Activated B cell treated with CpG ODN at 0.5 μM for 24 hours (primary cell): ENCODE measurements at regions of chr1 and their contacts with region 1.

Region 1: DNA sequence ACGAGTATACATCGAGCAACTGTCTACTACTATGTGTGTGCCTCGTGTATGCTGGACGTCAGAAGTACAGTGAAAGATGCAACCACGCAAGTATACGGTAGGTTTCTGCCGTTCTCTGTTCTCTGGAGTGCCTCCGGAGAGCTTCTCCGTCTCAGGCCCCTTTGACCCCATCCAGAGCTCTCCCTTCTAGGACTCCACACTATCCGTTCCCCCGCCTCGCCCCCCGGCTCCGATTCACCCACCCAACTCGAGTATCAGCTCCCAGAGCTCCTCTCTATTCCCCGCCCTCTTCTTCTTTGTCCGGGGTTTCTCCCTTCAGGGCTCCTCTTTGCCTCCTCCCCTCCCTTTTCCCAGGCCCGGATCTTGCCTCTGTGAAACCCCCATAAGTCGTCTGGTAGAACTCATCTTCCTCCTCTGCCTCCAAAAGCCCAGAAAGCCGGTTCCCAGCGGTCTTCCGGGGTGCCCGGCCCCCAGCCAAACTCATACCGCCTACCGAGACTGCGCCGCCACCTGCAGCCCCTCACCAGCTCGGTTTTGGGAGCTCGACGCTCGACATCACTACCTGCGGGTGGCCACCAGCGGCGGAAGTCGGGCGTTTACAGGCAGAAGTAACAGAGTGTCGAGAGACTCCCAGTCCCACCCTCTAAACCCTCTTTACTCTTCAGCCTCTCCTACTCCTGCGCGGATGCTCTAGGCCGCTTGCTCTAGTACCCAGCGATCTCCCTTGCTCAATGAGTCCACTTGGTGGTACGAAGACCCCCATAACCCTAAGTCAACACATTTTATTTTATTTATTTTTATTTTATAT is at the start of gene VPS72:
- DNase-seq: peak; percentile 73
- ATAC-seq: peak; percentile 93
- H3K4me3 Mint-ChIP-seq: peak within 1 kb of the TSS; percentile 100
- H3K27ac Mint-ChIP-seq: peak within 1 kb of the TSS; percentile 99
- H3K4me1 Mint-ChIP-seq: peaks cover 34% of the 10 kb centered on the region
- H3K27me3 Mint-ChIP-seq: no peaks in the 10 kb centered on the region
- CTCF ChIP-seq: no peak
- total RNA-seq, gene VPS72: 58.8 and 72.1 TPM in 2 replicates

Region 2: GRCh38 chr1:151130987-151131586 is 58.8 kb before region 1 on chr1:
- CTCF ChIA-PET with region 1: no interaction called
- POLR2A ChIA-PET with region 1: interaction called, 16 read pairs
- intact Hi-C with region 1: no loop called
- DNase-seq: peak; percentile 73
- ATAC-seq: peak; percentile 100
- H3K4me3 Mint-ChIP-seq: peak overlapping the region; percentile 84
- H3K27ac Mint-ChIP-seq: peak overlapping the region; percentile 89
- H3K4me1 Mint-ChIP-seq: peaks cover 12% of the 10 kb centered on the region
- H3K27me3 Mint-ChIP-seq: no peaks in the 10 kb centered on the region
- CTCF ChIP-seq: no peak

Region 3: GRCh38 chr1:151165738-151166505 is 23.9 kb before region 1 on chr1 and contains the starts of genes LYSMD1 and SCNM1:
- CTCF ChIA-PET with region 1: no interaction called
- POLR2A ChIA-PET with region 1: interaction called, 12 read pairs
- intact Hi-C with region 1: loop called (anchors 1 kb)
- DNase-seq: peak; percentile 87
- ATAC-seq: peak; percentile 96
- H3K4me3 Mint-ChIP-seq: peak within 1 kb of the TSS; percentile 92
- H3K27ac Mint-ChIP-seq: peak within 1 kb of the TSS; percentile 89
- H3K4me1 Mint-ChIP-seq: peaks cover 37% of the 10 kb centered on the region
- H3K27me3 Mint-ChIP-seq: no peaks in the 10 kb centered on the region
- CTCF ChIP-seq: no peak
- total RNA-seq, gene LYSMD1: 4.9 and 5.4 TPM in 2 replicates
- total RNA-seq, gene SCNM1: 52.8 and 58.2 TPM in 2 replicates

Region 4: GRCh38 chr1:151346769-151347522 is 157.1 kb after region 1 on chr1 and contains the start of gene RFX5:
- CTCF ChIA-PET with region 1: no interaction called
- POLR2A ChIA-PET with region 1: interaction called, 3 read pairs
- intact Hi-C with region 1: loop called (anchors 2 kb)
- DNase-seq: peak; percentile 77
- ATAC-seq: peak; percentile 91
- H3K4me3 Mint-ChIP-seq: peak within 1 kb of the TSS; percentile 98
- H3K27ac Mint-ChIP-seq: peak within 1 kb of the TSS; percentile 100
- H3K4me1 Mint-ChIP-seq: peaks cover 55% of the 10 kb centered on the region
- H3K27me3 Mint-ChIP-seq: no peaks in the 10 kb centered on the region
- CTCF ChIP-seq: no peak
- total RNA-seq, gene RFX5: 222 and 262 TPM in 2 replicates

Region 5: GRCh38 chr1:151459331-151460046 is 269.6 kb after region 1 on chr1 and contains the start of gene POGZ:
- CTCF ChIA-PET with region 1: no interaction called
- POLR2A ChIA-PET with region 1: no interaction called
- intact Hi-C with region 1: no loop called
- DNase-seq: peak; percentile 84
- ATAC-seq: peak; percentile 68
- H3K4me3 Mint-ChIP-seq: peak within 1 kb of the TSS; percentile 89
- H3K27ac Mint-ChIP-seq: peak within 1 kb of the TSS; percentile 91
- H3K4me1 Mint-ChIP-seq: peaks cover 40% of the 10 kb centered on the region
- H3K27me3 Mint-ChIP-seq: peaks cover 15% of the 10 kb centered on the region
- CTCF ChIP-seq: no peak
- total RNA-seq, gene POGZ: 121 and 135 TPM in 2 replicates

Region 6: DNA sequence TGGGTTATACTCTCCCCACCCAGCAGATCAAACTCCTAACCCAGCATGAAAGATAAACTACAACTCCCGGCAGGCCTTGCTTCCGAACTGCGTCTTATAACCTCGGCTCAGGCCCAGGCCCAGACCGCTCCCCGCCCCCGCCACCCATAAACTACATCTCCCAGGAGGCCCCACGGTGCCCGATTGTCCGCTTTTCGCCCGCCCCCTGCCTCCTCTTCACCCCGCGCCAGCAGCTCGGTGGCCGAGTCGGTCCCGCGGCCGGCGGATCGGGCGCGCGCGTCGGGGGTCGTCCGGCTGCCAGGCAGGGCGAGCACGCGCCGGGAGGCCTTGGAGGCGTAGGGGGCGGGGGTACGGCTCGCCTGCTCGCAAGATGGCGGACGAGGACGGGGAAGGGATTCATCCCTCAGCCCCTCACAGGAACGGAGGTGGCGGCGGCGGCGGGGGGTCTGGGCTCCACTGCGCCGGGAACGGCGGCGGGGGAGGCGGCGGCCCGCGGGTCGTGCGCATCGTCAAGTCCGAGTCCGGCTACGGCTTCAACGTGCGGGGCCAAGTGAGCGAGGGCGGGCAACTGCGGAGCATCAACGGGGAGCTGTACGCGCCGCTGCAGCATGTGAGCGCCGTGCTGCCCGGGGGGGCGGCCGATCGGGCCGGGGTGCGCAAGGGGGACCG is 422.1 kb after region 1 on chr1 and contains the start of gene SNX27:
- CTCF ChIA-PET with region 1: no interaction called
- POLR2A ChIA-PET with region 1: no interaction called
- intact Hi-C with region 1: no loop called
- DNase-seq: peak; percentile 81
- ATAC-seq: peak; percentile 96
- H3K4me3 Mint-ChIP-seq: peak within 1 kb of the TSS; percentile 95
- H3K27ac Mint-ChIP-seq: peak within 1 kb of the TSS; percentile 79
- H3K4me1 Mint-ChIP-seq: peaks cover 32% of the 10 kb centered on the region
- H3K27me3 Mint-ChIP-seq: peaks cover 9% of the 10 kb centered on the region
- CTCF ChIP-seq: no peak
- total RNA-seq, gene SNX27: 22.2 and 27.6 TPM in 2 replicates